Transverse colon (tissue), 4 donors: ENCODE measurements at regions of chr17 and their contacts with region 1.

Region 1: DNA sequence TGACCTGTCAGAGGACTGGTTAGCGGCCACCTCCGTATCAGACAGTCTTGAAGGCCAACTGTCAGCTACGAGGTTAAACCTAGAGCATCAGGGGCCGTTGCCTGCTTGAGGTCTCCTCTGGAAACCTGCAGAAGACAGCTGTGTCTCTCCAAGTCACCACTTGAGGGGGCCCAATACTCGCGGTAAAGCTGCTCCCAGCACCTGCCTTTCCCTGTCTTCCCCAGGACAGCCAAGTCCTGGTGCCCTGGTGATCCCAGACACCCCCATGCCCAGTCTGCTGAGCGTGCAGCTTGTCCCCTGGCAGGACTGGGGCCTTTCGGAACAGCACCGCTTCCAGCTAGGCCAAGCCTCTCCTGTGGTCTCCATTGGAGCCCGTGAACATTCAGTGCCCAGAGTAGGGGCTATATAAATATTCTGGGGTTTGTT is 80.1 kb downstream of the DNAH17 start:
- DNase-seq: peak; percentile 67
- H3K4me3 ChIP-seq: no peak overlapping the region
- H3K27ac ChIP-seq: no peak overlapping the region
- H3K4me1 ChIP-seq: no peaks in the 10 kb centered on the region
- H3K27me3 ChIP-seq: no peaks in the 10 kb centered on the region
- CTCF ChIP-seq: peak; percentile 58 to 73 (median 65)
- EP300 ChIP-seq: no peak
- POLR2A ChIP-seq: no peak

Region 2: GRCh38 chr17:78708510-78708973 is 211.4 kb after region 1 on chr17:
- in situ Hi-C with region 1: loop called in 2 of 4 experiments (anchors 10 to 25 kb)
- intact Hi-C with region 1: loop called (anchors 5 kb)
- DNase-seq: peak; percentile 70
- H3K4me3 ChIP-seq: no peak overlapping the region
- H3K27ac ChIP-seq: no peak overlapping the region
- H3K4me1 ChIP-seq: peaks cover 6 to 19% (median 10%) of the 10 kb centered on the region in 4 donors
- H3K27me3 ChIP-seq: no peaks in the 10 kb centered on the region
- CTCF ChIP-seq: peak; percentile 71 to 79 (median 78)
- EP300 ChIP-seq: no peak
- POLR2A ChIP-seq: no peak

Region 3: DNA sequence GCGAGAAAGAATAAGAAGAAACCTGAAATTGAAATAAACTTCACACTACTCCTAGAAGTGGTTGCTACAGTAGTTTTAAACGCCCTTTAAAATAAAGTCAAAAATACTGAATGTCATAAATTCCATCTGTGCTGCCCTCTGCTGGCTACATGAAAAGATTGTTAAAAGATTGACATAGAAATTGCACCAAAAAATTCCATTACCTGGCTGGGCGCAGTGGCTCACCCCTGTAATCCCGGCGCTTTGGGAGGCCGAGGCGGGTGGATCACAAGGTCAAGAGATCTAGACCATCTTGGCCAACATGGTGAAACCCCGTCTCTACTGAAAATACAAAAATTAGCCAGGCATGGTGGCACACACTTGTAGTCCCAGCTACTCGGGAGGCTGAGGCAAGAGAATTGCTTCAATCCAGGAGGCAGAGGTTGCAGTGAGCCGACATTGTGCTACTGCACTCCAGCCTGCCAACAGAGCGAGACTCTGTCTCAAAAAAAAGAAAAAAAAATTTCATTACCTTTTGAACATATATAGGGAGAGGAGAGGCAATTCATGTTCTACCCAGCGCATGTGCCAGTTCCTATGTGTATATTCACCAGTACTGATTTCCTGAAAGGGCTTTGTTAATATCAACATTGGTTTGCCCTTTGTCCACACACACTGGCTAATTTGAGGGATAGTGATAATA is 248.4 kb after region 1 on chr17:
- in situ Hi-C with region 1: no loop called
- intact Hi-C with region 1: loop called (anchors 10 kb)
- DNase-seq: no peak
- H3K4me3 ChIP-seq: no peak overlapping the region
- H3K27ac ChIP-seq: peak overlapping the region in 2 of 4 donors; percentile 5 to 68
- H3K4me1 ChIP-seq: peaks cover 7 to 71% (median 23%) of the 10 kb centered on the region in 4 donors
- H3K27me3 ChIP-seq: no peaks in the 10 kb centered on the region
- CTCF ChIP-seq: peak; percentile 56 to 71 (median 59)
- EP300 ChIP-seq: no peak
- POLR2A ChIP-seq: no peak

Region 4: GRCh38 chr17:78798695-78799559 is 301.8 kb after region 1 on chr17:
- in situ Hi-C with region 1: loop called in 1 of 4 experiments (anchors 25 kb)
- intact Hi-C with region 1: loop called (anchors 5 kb)
- DNase-seq: no peak
- H3K4me3 ChIP-seq: no peak overlapping the region
- H3K27ac ChIP-seq: no peak overlapping the region
- H3K4me1 ChIP-seq: no peaks in the 10 kb centered on the region
- H3K27me3 ChIP-seq: no peaks in the 10 kb centered on the region
- CTCF ChIP-seq: peak; percentile 31 to 36 (median 34)
- EP300 ChIP-seq: no peak
- POLR2A ChIP-seq: no peak

Region 5: DNA sequence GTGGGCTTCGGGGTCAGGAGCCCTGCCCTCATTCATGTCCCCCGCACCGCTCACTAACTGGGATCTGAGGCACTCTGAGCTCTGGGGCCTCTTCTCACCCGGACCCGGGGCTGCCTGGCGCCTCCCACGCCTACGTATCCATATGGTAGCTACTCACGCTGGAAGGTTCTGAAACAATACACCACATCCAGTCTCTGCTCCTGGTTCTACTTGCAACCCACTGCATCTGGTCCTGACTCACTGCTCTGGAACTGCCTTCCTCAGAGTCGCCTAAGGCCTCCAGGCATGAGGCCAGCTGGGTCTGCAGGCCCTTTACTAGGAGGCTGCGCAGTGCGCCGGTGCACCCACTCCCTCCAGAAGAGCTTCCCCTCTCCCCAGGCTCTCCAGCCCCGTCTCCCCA is 325.4 kb after region 1 on chr17:
- in situ Hi-C with region 1: loop called in 1 of 4 experiments (anchors 25 kb)
- intact Hi-C with region 1: no loop called
- DNase-seq: no peak
- H3K4me3 ChIP-seq: no peak overlapping the region
- H3K27ac ChIP-seq: no peak overlapping the region
- H3K4me1 ChIP-seq: peaks cover 0 to 3% (median 0%) of the 10 kb centered on the region in 4 donors
- H3K27me3 ChIP-seq: no peaks in the 10 kb centered on the region
- CTCF ChIP-seq: no peak
- EP300 ChIP-seq: no peak
- POLR2A ChIP-seq: no peak